MCF 10A (cell line): ENCODE measurements at regions of chrX and their contacts with region 1.

Region 1: DNA sequence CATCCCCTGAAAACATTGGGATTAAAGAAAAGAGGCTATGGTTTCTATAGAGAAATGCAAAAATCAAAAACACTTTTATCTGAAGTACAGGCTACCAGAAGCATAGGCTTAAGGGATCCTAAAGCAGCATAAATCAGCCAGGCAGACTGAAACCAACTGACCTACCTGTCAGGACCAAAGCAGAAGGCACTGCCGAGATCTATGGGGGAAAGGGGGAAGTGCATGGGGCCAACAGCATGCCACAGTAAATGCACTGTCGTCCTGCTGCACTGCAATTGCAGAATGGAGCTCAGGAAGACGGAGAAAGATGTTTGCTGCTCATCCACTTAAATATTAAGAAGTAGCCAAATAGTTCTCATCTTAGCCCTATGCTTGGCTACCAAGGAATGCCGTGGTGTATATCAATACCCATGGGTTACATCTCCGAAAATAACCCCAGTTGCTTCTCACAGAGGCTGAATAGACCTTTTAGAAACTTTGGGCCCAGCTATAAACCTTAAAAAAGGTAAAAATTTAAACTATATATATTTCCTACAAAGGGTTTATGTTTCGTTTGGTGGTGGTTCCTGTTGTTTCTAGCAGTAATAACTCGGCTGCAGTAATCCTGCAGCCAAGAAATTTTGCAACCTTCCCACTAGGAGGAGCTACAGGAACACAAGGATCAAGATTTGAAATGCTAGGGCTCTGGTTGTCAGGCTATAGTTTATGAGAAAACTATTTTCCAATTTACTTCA is 312.2 kb upstream of the DIAPH2 start:
- DNase-seq: peak; percentile 64
- H3K4me3 Mint-ChIP-seq: no peak overlapping the region
- H3K27ac Mint-ChIP-seq: no peak overlapping the region
- H3K4me1 Mint-ChIP-seq: no peaks in the 10 kb centered on the region
- H3K27me3 Mint-ChIP-seq: peaks cover 20% of the 10 kb centered on the region
- CTCF ChIP-seq: peak; percentile 55

Region 2: DNA sequence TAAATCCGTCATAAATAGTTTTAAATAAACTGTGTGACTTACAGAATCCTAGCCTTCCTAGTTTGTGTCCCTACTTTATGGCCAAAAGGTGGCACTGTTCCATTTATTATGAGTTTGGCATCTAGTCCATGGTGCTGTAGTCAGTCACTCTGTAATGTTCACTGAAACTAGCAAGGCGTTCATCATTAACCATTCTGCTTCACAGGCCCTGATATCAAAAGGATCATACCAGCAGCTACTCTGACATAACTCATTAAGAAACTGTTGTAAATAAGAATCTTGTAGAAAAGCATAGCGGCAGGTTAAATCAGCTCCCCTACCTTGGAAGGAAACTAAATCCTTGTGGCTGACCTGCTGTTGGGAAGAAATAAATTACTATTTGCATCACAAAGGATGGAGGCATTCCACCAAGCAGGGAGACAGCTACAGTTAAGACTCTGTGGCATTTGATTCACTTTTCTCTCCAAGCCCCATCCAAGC is 607.5 kb before region 1 on chrX:
- CTCF ChIA-PET with region 1: no interaction called
- POLR2A ChIA-PET with region 1: no interaction called
- intact Hi-C with region 1: loop called (anchors 10 kb)
- DNase-seq: peak; percentile 67
- H3K4me3 Mint-ChIP-seq: no peak overlapping the region
- H3K27ac Mint-ChIP-seq: no peak overlapping the region
- H3K4me1 Mint-ChIP-seq: no peaks in the 10 kb centered on the region
- H3K27me3 Mint-ChIP-seq: peaks cover 6% of the 10 kb centered on the region
- CTCF ChIP-seq: peak; percentile 48

Region 3: DNA sequence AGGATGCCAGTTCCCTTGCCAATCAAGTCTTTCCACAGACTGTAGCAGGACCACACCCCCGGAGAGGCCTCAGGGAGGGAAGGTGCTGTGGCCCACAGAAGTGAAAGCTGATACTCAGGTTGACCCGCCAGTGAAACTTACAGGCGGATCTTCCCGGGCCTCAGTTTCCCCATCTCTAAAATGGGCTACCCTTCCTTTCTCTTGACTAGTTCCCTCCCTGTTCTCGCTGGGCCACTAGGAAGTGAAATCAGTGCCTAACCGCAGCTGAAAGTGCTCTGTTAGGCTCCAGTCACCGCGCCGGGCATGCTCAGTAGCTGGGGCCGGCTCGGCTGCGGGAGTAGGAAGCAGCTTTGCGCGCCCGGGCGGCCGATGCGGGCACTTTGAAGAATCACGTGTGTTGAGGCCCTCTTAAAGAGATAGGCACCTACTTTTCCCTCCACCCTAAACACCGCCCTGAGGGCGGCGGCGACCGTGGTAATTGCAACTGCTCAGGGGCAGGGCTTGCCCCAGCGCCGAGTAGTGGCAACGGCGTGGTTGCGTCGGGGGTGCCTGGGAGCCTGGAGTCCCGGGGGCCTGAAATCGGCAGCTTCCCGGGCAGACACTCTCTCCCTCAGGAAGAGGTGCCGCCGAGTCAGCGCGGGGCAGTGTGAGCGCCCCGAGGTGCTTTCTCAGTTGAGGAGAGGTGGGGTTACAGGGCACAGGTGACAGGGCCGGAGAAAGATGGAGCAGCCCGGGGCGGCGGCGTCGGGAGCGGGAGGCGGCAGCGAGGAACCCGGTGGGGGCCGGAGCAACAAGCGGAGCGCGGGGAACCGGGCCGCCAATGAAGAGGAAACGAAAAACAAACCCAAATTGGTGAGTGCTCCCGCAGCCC is 312.1 kb after region 1 on chrX and contains the start of gene DIAPH2:
- CTCF ChIA-PET with region 1: no interaction called
- POLR2A ChIA-PET with region 1: no interaction called
- intact Hi-C with region 1: loop called (anchors 1 kb)
- DNase-seq: peak; percentile 83
- H3K4me3 Mint-ChIP-seq: peak within 1 kb of the TSS; percentile 97
- H3K27ac Mint-ChIP-seq: peak within 1 kb of the TSS; percentile 95
- H3K4me1 Mint-ChIP-seq: peaks cover 9% of the 10 kb centered on the region
- H3K27me3 Mint-ChIP-seq: peaks cover 15% of the 10 kb centered on the region
- CTCF ChIP-seq: no peak
- total RNA-seq, gene DIAPH2: 15.0 and 17.6 TPM in 2 replicates

Region 4: GRCh38 chrX:96752781-96753180 is 380.3 kb after region 1 on chrX:
- CTCF ChIA-PET with region 1: no interaction called
- POLR2A ChIA-PET with region 1: no interaction called
- intact Hi-C with region 1: loop called (anchors 5 kb)
- DNase-seq: no peak
- H3K4me3 Mint-ChIP-seq: no peak overlapping the region
- H3K27ac Mint-ChIP-seq: no peak overlapping the region
- H3K4me1 Mint-ChIP-seq: peaks cover 13% of the 10 kb centered on the region
- H3K27me3 Mint-ChIP-seq: peaks cover 31% of the 10 kb centered on the region
- CTCF ChIP-seq: no peak

Region 5: DNA sequence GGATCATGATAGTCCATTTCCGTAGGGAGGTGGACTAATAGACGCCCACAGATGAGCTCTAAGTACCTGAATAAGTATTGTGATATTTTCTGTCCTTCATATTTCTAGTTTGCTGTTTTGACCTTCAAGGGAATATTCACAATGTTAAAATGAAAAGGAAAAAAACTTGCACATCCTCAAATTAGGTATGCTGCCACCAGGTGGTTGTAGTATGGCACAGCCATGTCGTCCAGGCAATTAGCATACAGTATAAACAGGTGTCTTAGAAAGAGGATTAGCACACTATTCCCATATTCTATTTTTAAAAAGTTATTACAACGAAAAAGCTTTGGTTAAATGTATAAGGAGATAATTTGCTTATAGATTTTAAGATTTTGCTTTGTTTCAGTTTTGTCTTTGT is 1313.3 kb after region 1 on chrX:
- CTCF ChIA-PET with region 1: interaction called, 3 read pairs
- POLR2A ChIA-PET with region 1: no interaction called
- intact Hi-C with region 1: loop called (anchors 5 kb)
- DNase-seq: peak; percentile 55
- H3K4me3 Mint-ChIP-seq: no peak overlapping the region
- H3K27ac Mint-ChIP-seq: no peak overlapping the region
- H3K4me1 Mint-ChIP-seq: no peaks in the 10 kb centered on the region
- H3K27me3 Mint-ChIP-seq: peaks cover 21% of the 10 kb centered on the region
- CTCF ChIP-seq: peak; percentile 42